Calu3 (cell line): ENCODE measurements at regions of chr2 and their contacts with region 1.

Region 1: GRCh38 chr2:208294482-208295024 is 28.5 kb downstream of the PIKFYVE start:
- DNase-seq: no peak
- H3K4me3 Mint-ChIP-seq: no peak overlapping the region
- H3K27ac Mint-ChIP-seq: no peak overlapping the region
- H3K4me1 Mint-ChIP-seq: no peaks in the 10 kb centered on the region
- H3K27me3 Mint-ChIP-seq: no peaks in the 10 kb centered on the region
- CTCF ChIP-seq: no peak

Region 2: DNA sequence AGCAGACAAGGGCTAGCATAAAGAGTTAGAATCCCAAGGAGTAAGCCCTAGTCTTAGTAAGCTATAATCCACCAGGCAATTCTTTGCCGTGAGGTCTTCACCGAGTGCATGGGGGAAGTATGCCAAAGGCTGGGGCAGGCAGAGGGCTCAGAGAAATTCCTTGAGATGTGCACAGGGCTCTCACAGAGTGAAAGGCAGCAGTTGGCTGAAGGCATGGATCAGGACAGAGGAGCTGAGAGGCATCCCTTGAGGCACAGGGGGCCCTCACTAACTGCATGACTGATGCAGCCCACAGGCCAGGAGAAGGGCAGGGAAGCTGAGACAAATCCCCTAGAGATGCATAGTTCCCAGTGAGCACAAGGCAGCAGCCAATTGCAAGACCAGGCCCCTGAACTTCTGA is 146.2 kb after region 1 on chr2:
- CTCF ChIA-PET with region 1: no interaction called
- intact Hi-C with region 1: no loop called
- DNase-seq: no peak
- H3K4me3 Mint-ChIP-seq: no peak overlapping the region
- H3K27ac Mint-ChIP-seq: no peak overlapping the region
- H3K4me1 Mint-ChIP-seq: no peaks in the 10 kb centered on the region
- H3K27me3 Mint-ChIP-seq: no peaks in the 10 kb centered on the region
- CTCF ChIP-seq: no peak

Region 3: GRCh38 chr2:208627110-208627884 is 332.7 kb after region 1 on chr2:
- CTCF ChIA-PET with region 1: no interaction called
- intact Hi-C with region 1: loop called (anchors 5 kb)
- DNase-seq: no peak
- H3K4me3 Mint-ChIP-seq: no peak overlapping the region
- H3K27ac Mint-ChIP-seq: no peak overlapping the region
- H3K4me1 Mint-ChIP-seq: no peaks in the 10 kb centered on the region
- H3K27me3 Mint-ChIP-seq: no peaks in the 10 kb centered on the region
- CTCF ChIP-seq: no peak